Activated naive CD4-positive, alpha-beta T cell treated with anti-CD3 and anti-CD28 coated beads for 36 hours (primary cell): ENCODE measurements at regions of chr19 and their contacts with region 1.

Region 1: DNA sequence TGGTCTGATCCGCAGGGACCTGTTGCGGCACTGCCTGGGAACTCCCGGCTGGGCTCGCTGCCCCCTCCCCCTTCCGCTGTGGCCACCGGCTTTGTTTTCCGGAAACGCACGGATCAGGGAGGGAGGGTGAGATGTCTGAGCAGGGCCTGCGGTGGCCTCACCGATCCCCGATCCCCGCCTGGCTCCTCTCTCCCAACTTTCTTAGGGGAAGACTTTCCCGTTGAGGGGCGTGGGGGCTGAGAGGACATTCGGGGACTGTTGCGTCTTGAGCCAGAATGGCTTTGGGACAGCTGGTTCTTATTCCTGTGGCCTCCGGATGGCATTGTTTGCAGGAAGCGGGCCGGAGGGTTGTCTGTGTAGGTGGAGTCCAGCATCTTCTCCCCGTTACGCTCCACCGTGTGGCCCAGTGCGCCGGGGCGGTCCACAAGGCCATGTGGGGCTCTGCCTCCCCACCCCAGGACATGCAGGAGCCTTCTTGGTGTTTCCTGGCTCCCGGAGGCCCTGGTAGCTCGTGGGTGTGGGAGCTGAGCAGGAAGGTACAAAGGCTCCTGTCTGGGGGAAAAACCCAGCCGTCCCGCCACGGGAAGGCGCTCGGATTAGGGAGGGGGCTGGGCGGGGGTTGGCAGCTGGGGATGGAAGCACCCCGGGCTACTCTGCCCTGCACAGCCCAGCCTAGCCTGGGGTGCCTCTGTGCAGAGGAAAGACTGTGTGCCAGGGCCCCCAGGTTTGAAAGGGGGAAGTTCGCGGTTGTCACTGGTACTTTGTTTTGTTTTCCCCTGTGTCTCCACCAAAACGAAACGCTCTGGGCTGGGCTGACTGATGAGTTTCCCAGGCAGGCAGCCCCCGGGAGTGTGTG is 1.3 kb downstream of the CSNK1G2 start:
- DNase-seq: peak; percentile 89
- H3K4me3 Mint-ChIP-seq: peak overlapping the region; percentile 91
- H3K27ac Mint-ChIP-seq: peak overlapping the region; percentile 92
- H3K4me1 Mint-ChIP-seq: peaks cover 31% of the 10 kb centered on the region
- H3K27me3 Mint-ChIP-seq: no peaks in the 10 kb centered on the region

Region 2: DNA sequence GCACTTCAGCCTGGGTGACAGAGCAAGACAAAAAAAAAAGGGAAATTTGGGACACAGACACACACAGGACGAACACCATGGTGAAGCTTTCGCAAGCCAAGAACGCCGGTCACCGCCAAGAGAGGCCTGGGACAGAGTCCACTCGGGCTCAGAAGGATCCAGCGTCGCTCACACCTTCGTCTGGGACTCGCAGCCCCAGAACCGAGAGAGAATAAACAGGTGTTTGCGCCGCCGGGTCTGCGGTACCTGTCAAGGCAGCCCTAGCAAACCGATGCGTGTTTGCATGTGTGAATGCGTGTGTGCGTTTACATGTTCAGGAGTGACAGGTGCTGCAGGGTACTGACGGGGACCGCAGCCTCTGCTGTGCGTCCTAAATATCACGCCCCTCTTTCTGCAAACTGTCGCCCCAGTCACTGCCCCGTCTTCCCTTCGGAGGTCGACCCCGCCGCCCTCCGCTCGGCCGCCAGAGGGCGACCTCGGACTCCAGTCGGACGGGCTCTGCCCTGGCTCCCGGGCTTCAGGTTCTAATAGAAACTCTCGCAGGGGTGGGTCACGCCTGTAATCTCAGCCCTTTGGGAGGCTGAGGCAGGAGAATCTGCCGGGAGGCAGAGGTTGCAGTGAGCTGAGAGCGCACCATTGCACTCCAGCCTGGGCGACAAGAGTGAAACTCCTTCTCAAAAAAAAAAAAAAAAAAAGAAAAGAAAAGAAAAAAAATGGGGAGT is 13.1 kb before region 1 on chr19:
- CTCF ChIA-PET with region 1: interaction called, 10 read pairs
- intact Hi-C with region 1: loop called (anchors 1 kb)
- DNase-seq: peak; percentile 78
- H3K4me3 Mint-ChIP-seq: peak overlapping the region; percentile 65
- H3K27ac Mint-ChIP-seq: no peak overlapping the region
- H3K4me1 Mint-ChIP-seq: peaks cover 18% of the 10 kb centered on the region
- H3K27me3 Mint-ChIP-seq: no peaks in the 10 kb centered on the region